Heart right ventricle (tissue), 16 donors: ENCODE measurements at regions of chr1 and their contacts with region 1.

Region 1: GRCh38 chr1:165481820-165482532 is 37.0 kb upstream of the RXRG start:
- DNase-seq: peak in 1 of 2 donors; percentile 56
- ATAC-seq: peak; percentile 67 to 92 (median 86)
- H3K4me3 ChIP-seq: no peak overlapping the region
- H3K27ac ChIP-seq: peak overlapping the region in 2 of 10 donors; percentile 39 to 51
- H3K4me1 ChIP-seq: peaks cover 0 to 31% (median 21%) of the 10 kb centered on the region in 9 donors
- H3K27me3 ChIP-seq: peaks cover 0 to under 1% (median 0%) of the 10 kb centered on the region in 7 donors
- CTCF ChIP-seq: no peak

Region 2: GRCh38 chr1:165409657-165410358 is 72.2 kb before region 1 on chr1:
- intact Hi-C with region 1: loop called in 1 of 10 experiments (anchors 10 kb)
- DNase-seq: peak in 1 of 2 donors; percentile 73
- ATAC-seq: peak; percentile 84 to 96 (median 92)
- H3K4me3 ChIP-seq: no peak overlapping the region
- H3K27ac ChIP-seq: peak overlapping the region in 2 of 10 donors; percentile 16 to 26
- H3K4me1 ChIP-seq: peaks cover 0 to 35% (median 13%) of the 10 kb centered on the region in 9 donors
- H3K27me3 ChIP-seq: peaks cover 0 to 22% (median 0%) of the 10 kb centered on the region in 7 donors
- CTCF ChIP-seq: no peak

Region 3: GRCh38 chr1:165452336-165453130 is 29.4 kb before region 1 on chr1:
- intact Hi-C with region 1: loop called in 2 of 10 experiments (anchors 5 kb)
- DNase-seq: peak; percentile 26 to 56
- ATAC-seq: peak; percentile 71 to 96 (median 90)
- H3K4me3 ChIP-seq: no peak overlapping the region
- H3K27ac ChIP-seq: peak overlapping the region in 7 of 10 donors; percentile 44 to 85 (median 65)
- H3K4me1 ChIP-seq: peaks cover 0 to 22% (median 11%) of the 10 kb centered on the region in 9 donors
- H3K27me3 ChIP-seq: peaks cover 0 to 3% (median 0%) of the 10 kb centered on the region in 7 donors
- CTCF ChIP-seq: peak in 6 of 9 donors; percentile 3 to 36 (median 19)